ENCODE measurements at regions of chr6 and their contacts with region 1.

Region 1: GRCh38 chr6:158704181-158704822 is 54.4 kb downstream of the SYTL3 start:
- DNase-seq: peak; percentile 28
- ATAC-seq: peak; percentile 94
- H3K4me3 ChIP-seq: peak overlapping the region; percentile 50
- H3K27ac ChIP-seq: no peak overlapping the region
- H3K4me1 ChIP-seq: peaks cover 12% of the 10 kb centered on the region; the same call in 1 of the 2 replicates
- H3K27me3 ChIP-seq: no peaks in the 10 kb centered on the region
- CTCF ChIP-seq: peak; percentile 95
- POLR2A ChIP-seq: no peak
- RAD21 ChIP-seq: peak; percentile 83

Region 2: DNA sequence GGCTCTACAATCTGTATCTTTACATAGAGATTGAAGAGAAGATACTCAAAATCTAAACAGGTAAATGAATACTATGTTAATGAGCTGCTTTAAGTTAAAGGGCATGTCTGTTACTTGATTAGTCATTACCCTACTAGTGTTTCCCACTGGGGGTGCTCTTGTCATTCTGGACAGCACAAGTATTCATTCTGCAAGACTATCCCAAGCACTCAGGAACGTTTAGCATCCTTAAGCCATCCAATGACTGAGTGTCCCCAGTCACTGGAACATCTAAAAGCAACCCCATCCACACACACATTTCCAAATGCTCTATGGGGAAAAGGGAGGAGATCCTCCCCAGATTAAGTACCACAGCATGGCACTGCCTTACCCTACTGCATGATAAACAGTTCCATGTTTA is 89.1 kb after region 1 on chr6:
- CTCF ChIA-PET with region 1: interaction called, 3 read pairs
- POLR2A ChIA-PET with region 1: no interaction called
- dilution Hi-C with region 1: no loop called
- in situ Hi-C with region 1: no loop called
- intact Hi-C with region 1: loop called (anchors 5 kb)
- DNase-seq: peak; percentile 65
- ATAC-seq: peak; percentile 80
- H3K4me3 ChIP-seq: no peak overlapping the region
- H3K27ac ChIP-seq: no peak overlapping the region
- H3K4me1 ChIP-seq: peaks cover 2% of the 10 kb centered on the region; the same call in 1 of the 2 replicates
- H3K27me3 ChIP-seq: no peaks in the 10 kb centered on the region
- CTCF ChIP-seq: peak; percentile 62
- POLR2A ChIP-seq: no peak
- RAD21 ChIP-seq: peak; percentile 79

Region 3: GRCh38 chr6:159163901-159164370 is 459.6 kb after region 1 on chr6:
- CTCF ChIA-PET with region 1: no interaction called
- POLR2A ChIA-PET with region 1: no interaction called
- dilution Hi-C with region 1: no loop called
- in situ Hi-C with region 1: no loop called
- intact Hi-C with region 1: no loop called
- DNase-seq: peak; percentile 42
- ATAC-seq: peak; percentile 43
- H3K4me3 ChIP-seq: no peak overlapping the region
- H3K27ac ChIP-seq: no peak overlapping the region
- H3K4me1 ChIP-seq: no peaks in the 10 kb centered on the region; the same call in 1 of the 2 replicates
- H3K27me3 ChIP-seq: peaks cover 36% of the 10 kb centered on the region
- CTCF ChIP-seq: no peak
- POLR2A ChIP-seq: no peak
- RAD21 ChIP-seq: no peak